Activated naive CD4-positive, alpha-beta T cell treated with anti-CD3 and anti-CD28 coated beads for 36 hours (primary cell): ENCODE measurements at regions of chr13 and their contacts with region 1.

Region 1: DNA sequence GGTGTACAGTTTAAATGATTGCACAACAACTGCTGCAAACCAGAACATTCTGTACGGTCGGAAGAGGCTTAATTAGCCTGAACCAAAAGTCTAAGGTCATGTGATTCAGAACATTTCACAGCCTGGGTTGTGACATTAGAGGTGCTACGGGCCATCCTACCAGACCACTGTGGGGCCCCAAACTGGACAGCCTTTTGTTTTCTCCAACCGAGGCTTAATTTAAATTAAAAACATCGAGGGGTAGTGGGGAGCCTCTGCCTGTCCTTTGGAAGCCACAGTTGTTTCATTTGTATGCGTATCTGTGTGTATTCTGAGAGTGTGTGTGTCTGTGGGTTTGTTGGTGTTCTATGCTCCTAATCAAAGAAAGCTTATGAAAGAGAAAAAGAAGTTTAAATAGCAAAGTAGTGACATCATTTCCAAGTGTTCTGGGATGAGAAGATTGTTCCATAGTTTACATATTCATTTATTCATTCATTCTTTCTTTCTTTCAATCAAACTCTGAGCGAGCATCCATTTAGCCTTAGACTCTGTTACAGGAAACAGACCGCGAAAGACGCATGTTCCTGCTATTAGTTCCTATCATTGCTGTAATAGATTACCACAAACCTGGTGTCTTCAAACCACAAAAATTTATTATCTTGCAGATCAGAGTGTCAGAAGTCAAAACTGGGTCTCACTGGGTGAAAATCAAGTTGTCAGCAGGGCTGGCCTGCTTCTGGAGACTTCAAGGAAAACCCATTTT is 444.8 kb downstream of the FOXO1 start:
- DNase-seq: peak; percentile 80
- H3K4me3 Mint-ChIP-seq: peak overlapping the region; percentile 25
- H3K27ac Mint-ChIP-seq: peak overlapping the region; percentile 92
- H3K4me1 Mint-ChIP-seq: peaks cover 69% of the 10 kb centered on the region
- H3K27me3 Mint-ChIP-seq: no peaks in the 10 kb centered on the region

Region 2: GRCh38 chr13:39777527-39778061 is 444.0 kb before region 1 on chr13:
- CTCF ChIA-PET with region 1: no interaction called
- intact Hi-C with region 1: loop called (anchors 5 kb)
- DNase-seq: peak; percentile 70
- H3K4me3 Mint-ChIP-seq: no peak overlapping the region
- H3K27ac Mint-ChIP-seq: peak overlapping the region; percentile 80
- H3K4me1 Mint-ChIP-seq: peaks cover 46% of the 10 kb centered on the region
- H3K27me3 Mint-ChIP-seq: no peaks in the 10 kb centered on the region

Region 3: GRCh38 chr13:40109356-40109844 is 112.2 kb before region 1 on chr13:
- CTCF ChIA-PET with region 1: no interaction called
- intact Hi-C with region 1: loop called (anchors 1 kb)
- DNase-seq: peak; percentile 59
- H3K4me3 Mint-ChIP-seq: no peak overlapping the region
- H3K27ac Mint-ChIP-seq: peak overlapping the region; percentile 25
- H3K4me1 Mint-ChIP-seq: peaks cover 21% of the 10 kb centered on the region
- H3K27me3 Mint-ChIP-seq: no peaks in the 10 kb centered on the region

Region 4: DNA sequence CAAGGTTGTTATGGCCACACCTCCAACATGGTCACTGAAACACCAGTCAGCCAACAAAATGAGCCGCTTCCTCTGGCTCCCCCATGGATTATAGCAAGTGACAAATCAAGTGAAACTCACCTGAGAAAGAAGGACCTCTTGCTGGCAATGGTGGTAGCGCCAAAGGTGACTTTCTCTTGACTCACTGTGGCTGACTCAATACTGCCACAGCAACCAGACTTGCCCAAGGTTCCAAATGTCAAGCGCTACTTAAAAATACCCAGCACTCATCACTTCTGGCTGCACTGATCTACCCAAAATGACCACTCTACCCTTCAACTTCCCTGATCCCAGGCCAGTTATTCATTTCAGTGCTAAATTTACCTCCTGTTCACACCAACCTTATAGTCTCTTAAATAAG is 50.6 kb before region 1 on chr13:
- CTCF ChIA-PET with region 1: interaction called, 3 read pairs
- intact Hi-C with region 1: loop called (anchors 2 kb)
- DNase-seq: peak; percentile 82
- H3K4me3 Mint-ChIP-seq: no peak overlapping the region
- H3K27ac Mint-ChIP-seq: peak overlapping the region; percentile 9
- H3K4me1 Mint-ChIP-seq: peaks cover 41% of the 10 kb centered on the region
- H3K27me3 Mint-ChIP-seq: no peaks in the 10 kb centered on the region

Region 5: GRCh38 chr13:40251343-40252032 is 29.9 kb after region 1 on chr13:
- CTCF ChIA-PET with region 1: no interaction called
- intact Hi-C with region 1: loop called (anchors 1 kb)
- DNase-seq: peak; percentile 28
- H3K4me3 Mint-ChIP-seq: no peak overlapping the region
- H3K27ac Mint-ChIP-seq: peak overlapping the region; percentile 88
- H3K4me1 Mint-ChIP-seq: peaks cover 52% of the 10 kb centered on the region
- H3K27me3 Mint-ChIP-seq: no peaks in the 10 kb centered on the region

Region 6: DNA sequence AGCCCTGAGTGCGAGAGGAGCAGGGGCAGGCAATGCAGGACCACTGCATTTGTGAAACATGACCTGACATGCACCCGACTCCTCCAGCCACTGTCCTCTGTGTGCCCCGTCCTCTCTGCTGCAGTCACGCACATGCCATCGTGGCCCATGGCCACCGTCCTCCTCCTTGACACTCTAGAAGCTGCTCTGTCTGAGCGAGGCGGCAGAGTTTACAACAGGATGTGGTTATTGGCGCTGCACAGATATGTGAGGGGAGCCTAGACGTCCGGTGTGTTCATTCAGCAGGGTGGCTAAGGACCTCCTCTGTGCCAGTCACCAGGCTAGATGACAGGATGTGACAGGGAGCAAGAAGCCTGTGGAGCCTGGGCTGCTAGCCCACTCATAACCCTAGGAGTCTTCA is 167.0 kb after region 1 on chr13:
- CTCF ChIA-PET with region 1: no interaction called
- intact Hi-C with region 1: loop called (anchors 1 kb)
- DNase-seq: peak; percentile 94
- H3K4me3 Mint-ChIP-seq: peak overlapping the region; percentile 77
- H3K27ac Mint-ChIP-seq: peak overlapping the region; percentile 92
- H3K4me1 Mint-ChIP-seq: peaks cover 51% of the 10 kb centered on the region
- H3K27me3 Mint-ChIP-seq: no peaks in the 10 kb centered on the region